A673 (cell line): ENCODE measurements at regions of chr11 and their contacts with region 1.

Region 1: GRCh38 chr11:83971063-83971462 is 684.9 kb upstream of the CCDC90B start:
- DNase-seq: peak; percentile 30
- H3K4me3 ChIP-seq: no peak overlapping the region
- H3K27ac ChIP-seq: no peak overlapping the region
- H3K4me1 ChIP-seq: no peaks in the 10 kb centered on the region
- H3K27me3 ChIP-seq: no peaks in the 10 kb centered on the region
- CTCF ChIP-seq: no peak

Region 2: DNA sequence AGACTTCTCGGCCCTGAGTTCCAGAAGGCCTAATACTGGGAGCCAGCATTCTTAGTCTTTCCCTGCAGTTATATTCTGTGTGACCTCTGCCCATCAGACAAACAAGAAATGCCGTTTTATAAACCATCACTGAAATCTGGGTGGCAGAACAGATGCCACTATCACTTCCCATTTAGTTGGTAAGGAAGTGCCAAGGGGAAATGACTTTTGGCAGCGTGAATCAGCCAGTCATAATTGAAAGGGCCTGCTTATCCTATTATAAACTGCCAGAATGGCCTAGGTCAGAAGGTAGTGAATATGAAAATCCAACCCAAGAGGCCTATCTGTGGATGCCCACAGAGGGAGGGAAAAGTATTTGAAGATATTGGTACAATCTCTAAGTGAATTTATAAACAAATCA is 38.1 kb before region 1 on chr11:
- CTCF ChIA-PET with region 1: no interaction called
- POLR2A ChIA-PET with region 1: no interaction called
- intact Hi-C with region 1: no loop called
- DNase-seq: no peak
- H3K4me3 ChIP-seq: no peak overlapping the region
- H3K27ac ChIP-seq: no peak overlapping the region
- H3K4me1 ChIP-seq: no peaks in the 10 kb centered on the region
- H3K27me3 ChIP-seq: no peaks in the 10 kb centered on the region
- CTCF ChIP-seq: no peak

Region 3: DNA sequence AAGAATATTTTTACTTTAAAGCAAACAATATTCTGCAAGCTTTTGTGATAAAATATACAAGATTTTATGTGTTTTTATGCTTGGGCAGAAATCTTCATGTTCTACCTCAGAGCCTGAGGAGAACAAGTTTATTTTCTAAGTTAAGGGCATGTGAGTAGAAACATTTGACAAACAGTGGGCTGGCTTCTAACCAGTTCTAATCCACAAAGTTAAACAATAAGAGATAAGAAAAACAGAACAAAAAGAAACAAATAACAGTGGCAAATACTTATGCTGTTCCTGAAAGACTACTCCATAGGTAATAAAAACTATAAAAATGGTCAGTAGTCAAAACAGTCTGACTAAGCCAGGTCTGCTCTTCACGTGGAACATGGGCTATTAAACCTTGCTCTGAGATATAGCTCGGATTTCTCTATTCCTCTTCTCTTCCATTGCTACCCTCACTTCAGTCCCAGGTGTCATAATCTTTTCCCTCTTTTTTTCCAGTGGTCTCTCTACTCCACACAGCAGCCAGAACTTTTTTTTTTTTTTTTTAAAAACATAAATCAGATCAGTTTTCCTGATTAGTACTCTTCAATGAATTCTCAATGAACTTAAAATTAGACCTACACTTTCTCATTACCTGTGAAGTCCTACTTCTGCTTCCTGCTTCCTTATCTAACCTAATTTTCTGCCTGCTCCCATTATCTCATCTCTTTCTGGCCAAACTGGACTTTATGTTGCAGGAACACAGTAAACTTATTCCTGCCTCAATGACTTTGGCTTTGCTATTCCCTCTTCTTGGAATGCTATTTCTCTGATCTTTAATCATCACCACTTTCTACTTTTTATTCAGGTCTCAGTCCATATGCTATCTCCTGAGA is 13.8 kb before region 1 on chr11:
- CTCF ChIA-PET with region 1: no interaction called
- POLR2A ChIA-PET with region 1: no interaction called
- intact Hi-C with region 1: loop called (anchors 1 kb)
- DNase-seq: no peak
- H3K4me3 ChIP-seq: no peak overlapping the region
- H3K27ac ChIP-seq: no peak overlapping the region
- H3K4me1 ChIP-seq: no peaks in the 10 kb centered on the region
- H3K27me3 ChIP-seq: no peaks in the 10 kb centered on the region
- CTCF ChIP-seq: no peak

Region 4: GRCh38 chr11:83998921-83999320 is 27.9 kb after region 1 on chr11:
- CTCF ChIA-PET with region 1: no interaction called
- POLR2A ChIA-PET with region 1: no interaction called
- intact Hi-C with region 1: no loop called
- DNase-seq: no peak
- H3K4me3 ChIP-seq: no peak overlapping the region
- H3K27ac ChIP-seq: no peak overlapping the region
- H3K4me1 ChIP-seq: no peaks in the 10 kb centered on the region
- H3K27me3 ChIP-seq: no peaks in the 10 kb centered on the region
- CTCF ChIP-seq: no peak